Sigmoid colon (tissue), 7 donors: ENCODE measurements at regions of chr22 and their contacts with region 1.

Region 1: GRCh38 chr22:38872172-38872830 is at the start of gene CBX6:
- DNase-seq: peak; percentile 98
- H3K4me3 ChIP-seq: peak within 1 kb of the TSS; percentile 58 to 83 (median 71)
- H3K27ac ChIP-seq: peak within 1 kb of the TSS; percentile 92 to 99 (median 96)
- H3K4me1 ChIP-seq: peaks cover 0 to 49% (median 45%) of the 10 kb centered on the region in 4 donors
- H3K27me3 ChIP-seq: no peaks in the 10 kb centered on the region
- CTCF ChIP-seq: no peak
- EP300 ChIP-seq: no peak
- POLR2A ChIP-seq: peak; percentile 42
- total RNA-seq, gene CBX6: 47.2 to 90.6 (median 59.3) TPM

Region 2: DNA sequence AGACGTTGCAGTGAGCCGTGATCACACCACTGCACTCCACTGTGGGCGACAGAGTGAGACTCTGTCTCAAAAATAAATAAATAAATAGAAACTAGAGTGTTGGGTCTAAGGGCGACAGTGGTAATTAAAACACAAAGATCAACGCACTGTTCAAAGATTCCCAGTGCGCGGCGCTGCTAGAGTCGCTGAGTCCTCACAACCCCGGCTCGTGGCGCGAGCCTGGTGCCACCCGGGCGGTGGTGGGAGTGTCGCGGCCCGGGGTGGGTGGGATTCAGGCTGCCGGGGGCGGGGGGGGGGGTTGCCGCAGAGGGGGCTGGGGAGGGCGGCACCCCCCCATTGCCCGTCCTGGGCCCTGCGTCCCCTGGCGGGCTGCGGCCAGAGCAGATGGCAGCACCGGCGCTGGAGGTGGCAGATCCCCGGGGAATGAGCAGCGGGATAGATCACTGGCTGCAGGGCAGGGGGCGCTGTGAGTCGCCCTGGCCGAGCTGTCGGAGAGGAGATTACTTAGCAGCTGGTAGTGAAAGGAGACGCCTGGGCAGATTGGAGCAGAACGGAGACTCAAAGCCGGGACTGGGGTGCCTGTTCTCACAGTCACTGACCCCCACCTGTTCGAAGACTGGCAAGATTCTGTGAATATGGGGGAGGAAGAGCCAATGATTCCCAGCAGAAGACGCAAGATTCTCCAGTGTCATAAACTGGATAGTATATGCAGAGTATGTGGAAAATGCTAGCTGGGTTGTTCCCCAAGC is 54.9 kb after region 1 on chr22:
- intact Hi-C with region 1: loop called (anchors 1 kb)
- DNase-seq: peak; percentile 89
- H3K4me3 ChIP-seq: peak overlapping the region; percentile 17 to 53 (median 44)
- H3K27ac ChIP-seq: peak overlapping the region; percentile 66 to 90 (median 77)
- H3K4me1 ChIP-seq: peaks cover 0 to 33% (median 28%) of the 10 kb centered on the region in 4 donors
- H3K27me3 ChIP-seq: no peaks in the 10 kb centered on the region
- CTCF ChIP-seq: peak; percentile 55 to 81 (median 62)
- EP300 ChIP-seq: no peak
- POLR2A ChIP-seq: no peak

Region 3: DNA sequence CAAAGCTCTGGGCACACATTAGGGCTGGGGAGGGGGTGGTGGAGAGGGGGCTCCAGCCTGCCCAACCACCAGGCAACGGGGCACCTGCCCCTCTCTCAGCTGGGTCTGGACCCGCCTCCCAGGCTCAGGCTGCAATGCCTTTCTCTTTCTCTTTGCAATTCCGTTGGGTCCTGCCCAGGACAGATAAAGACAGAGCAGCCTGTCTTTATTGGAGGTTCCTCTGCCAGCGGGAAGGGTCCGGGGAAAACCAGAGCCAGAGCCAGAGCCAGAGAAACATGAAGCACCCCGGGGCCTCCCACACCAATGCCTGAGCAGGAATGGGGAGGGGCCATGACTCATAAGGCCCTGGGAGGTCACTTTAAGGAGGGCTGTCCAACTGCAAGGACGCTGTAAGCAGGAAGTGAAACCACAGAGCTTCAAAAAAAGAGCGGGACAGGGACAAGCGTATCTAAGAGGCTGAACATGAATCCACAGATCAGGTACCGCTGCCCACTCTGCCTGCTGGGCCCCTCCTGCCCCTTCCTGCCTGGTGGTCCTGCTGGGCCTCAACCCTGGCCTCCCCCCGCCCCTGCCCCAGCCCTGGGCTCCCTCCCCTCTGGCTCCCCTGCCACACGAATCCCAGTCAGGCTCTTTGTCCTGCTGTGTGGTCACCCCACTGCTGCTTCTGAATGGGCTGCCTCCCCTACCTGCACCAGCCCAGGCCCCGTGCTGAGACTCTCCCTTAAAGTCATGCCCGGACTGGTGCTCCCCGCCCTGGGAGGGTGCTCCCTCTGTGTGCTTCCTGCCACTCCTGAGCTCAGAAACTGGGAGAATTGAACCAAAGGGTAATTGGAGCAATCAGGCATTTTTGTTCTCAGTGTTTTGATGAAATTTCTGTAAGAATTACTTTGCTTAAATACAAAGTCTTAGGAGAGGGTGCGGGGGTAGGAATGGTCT is 110.0 kb after region 1 on chr22 and contains the start of gene APOBEC3B:
- intact Hi-C with region 1: loop called (anchors 5 kb)
- DNase-seq: peak; percentile 94
- H3K4me3 ChIP-seq: peak within 1 kb of the TSS in 3 of 4 donors; percentile 40 to 53 (median 48)
- H3K27ac ChIP-seq: peak within 1 kb of the TSS in 3 of 4 donors; percentile 71 to 78 (median 74)
- H3K4me1 ChIP-seq: peaks cover 0 to 18% (median 4%) of the 10 kb centered on the region in 4 donors
- H3K27me3 ChIP-seq: no peaks in the 10 kb centered on the region
- CTCF ChIP-seq: no peak
- EP300 ChIP-seq: no peak
- POLR2A ChIP-seq: no peak
- total RNA-seq, gene APOBEC3B: 0.71 to 3.1 TPM in 2 of 4 donors, not detected in the others

Region 4: DNA sequence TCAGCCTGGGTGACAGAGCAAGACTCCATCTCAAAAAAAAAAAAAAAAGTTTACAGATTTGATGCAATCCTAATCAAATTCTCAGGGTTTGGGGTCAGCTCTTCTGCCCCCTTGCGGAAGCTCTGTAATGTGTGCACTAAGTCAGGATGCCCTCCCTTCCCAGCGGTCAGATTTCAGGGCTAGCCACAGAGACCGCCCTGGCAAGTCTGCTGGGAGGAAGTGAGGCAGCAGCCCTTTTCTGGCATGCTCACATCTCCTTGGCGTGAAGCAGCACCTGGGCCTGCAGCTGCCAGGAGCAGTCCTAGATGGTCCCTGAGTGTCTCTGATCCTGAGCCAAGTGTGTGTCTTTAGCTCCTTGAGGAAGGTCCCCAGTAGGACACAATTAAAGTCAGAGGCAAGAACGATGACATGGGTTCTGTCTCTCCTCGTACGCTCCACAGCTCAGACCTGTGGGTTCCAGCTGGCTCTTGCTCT is 130.9 kb after region 1 on chr22:
- intact Hi-C with region 1: loop called (anchors 1 kb)
- DNase-seq: peak; percentile 86
- H3K4me3 ChIP-seq: no peak overlapping the region
- H3K27ac ChIP-seq: no peak overlapping the region
- H3K4me1 ChIP-seq: peaks cover 0 to 8% (median 2%) of the 10 kb centered on the region in 4 donors
- H3K27me3 ChIP-seq: no peaks in the 10 kb centered on the region
- CTCF ChIP-seq: peak; percentile 53 to 80 (median 70)
- EP300 ChIP-seq: no peak
- POLR2A ChIP-seq: no peak

Region 5: GRCh38 chr22:39152511-39153219 is 280.4 kb after region 1 on chr22 and contains the start of gene CBX7:
- intact Hi-C with region 1: loop called (anchors 2 kb)
- DNase-seq: peak; percentile 98
- H3K4me3 ChIP-seq: peak within 1 kb of the TSS; percentile 75 to 99 (median 98)
- H3K27ac ChIP-seq: peak within 1 kb of the TSS; percentile 95 to 99 (median 98)
- H3K4me1 ChIP-seq: peaks cover 0 to 54% (median 42%) of the 10 kb centered on the region in 4 donors
- H3K27me3 ChIP-seq: no peaks in the 10 kb centered on the region
- CTCF ChIP-seq: no peak
- EP300 ChIP-seq: no peak
- POLR2A ChIP-seq: peak; percentile 88 to 93
- total RNA-seq, gene CBX7: 108 to 166 (median 125) TPM

Region 6: DNA sequence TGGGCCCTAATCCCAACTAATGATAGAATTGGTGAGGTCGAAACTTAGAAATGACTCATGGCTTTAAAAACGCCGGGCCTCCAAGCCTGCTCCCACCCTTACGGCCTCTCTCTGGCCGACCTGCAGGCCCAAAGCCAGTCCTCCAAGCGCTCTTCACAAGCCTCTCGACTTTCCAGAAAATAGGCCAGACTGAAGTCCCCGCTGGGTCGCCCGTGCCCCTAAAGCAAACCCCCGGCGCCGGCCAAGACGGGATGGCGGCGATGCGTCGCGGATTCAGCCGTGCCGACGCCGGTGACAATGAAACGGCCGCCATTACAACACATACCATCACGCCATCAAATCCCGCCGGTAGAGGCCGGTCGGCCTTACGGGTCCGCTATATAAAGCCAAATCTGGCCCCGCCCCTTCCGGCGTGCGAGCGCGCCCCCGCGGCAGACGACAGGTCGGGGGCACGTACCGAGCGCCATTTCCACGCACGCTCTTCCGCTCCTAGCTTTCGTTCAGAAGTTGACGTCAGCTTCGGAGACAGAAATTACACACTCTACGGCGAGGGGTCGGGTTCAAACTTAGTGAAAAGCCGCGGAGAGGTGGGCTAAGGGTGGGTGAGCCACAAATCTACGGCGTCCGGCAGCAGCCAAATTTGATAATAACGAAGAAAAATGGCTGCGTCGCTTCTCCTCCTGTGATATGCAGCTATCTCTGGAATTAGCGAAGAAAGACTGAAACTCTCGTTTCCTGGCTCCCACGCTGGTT is 447.1 kb after region 1 on chr22 and contains the start of gene RPL3:
- intact Hi-C with region 1: loop called (anchors 2 kb)
- DNase-seq: peak; percentile 98
- H3K4me3 ChIP-seq: peak within 1 kb of the TSS; percentile 61 to 83 (median 76)
- H3K27ac ChIP-seq: peak within 1 kb of the TSS; percentile 92 to 99 (median 96)
- H3K4me1 ChIP-seq: peaks cover 0 to 49% (median 43%) of the 10 kb centered on the region in 4 donors
- H3K27me3 ChIP-seq: no peaks in the 10 kb centered on the region
- CTCF ChIP-seq: peak in 1 of 4 experiments; percentile 13
- EP300 ChIP-seq: peak in 2 of 4 donors; percentile 62 to 93
- POLR2A ChIP-seq: peak; percentile 87 to 91
- total RNA-seq, gene RPL3: 1,532 to 2,212 (median 2,076) TPM

Region 7: GRCh38 chr22:39520054-39520891 is 648.0 kb after region 1 on chr22 and contains the start of gene ATF4:
- intact Hi-C with region 1: loop called (anchors 5 kb)
- DNase-seq: peak; percentile 99
- H3K4me3 ChIP-seq: peak within 1 kb of the TSS; percentile 80 to 100 (median 96)
- H3K27ac ChIP-seq: peak within 1 kb of the TSS; percentile 99 to 100 (median 99)
- H3K4me1 ChIP-seq: peaks cover 0 to 56% (median 50%) of the 10 kb centered on the region in 4 donors
- H3K27me3 ChIP-seq: no peaks in the 10 kb centered on the region
- CTCF ChIP-seq: no peak
- EP300 ChIP-seq: peak in 1 of 4 donors; percentile 32
- POLR2A ChIP-seq: peak; percentile 100
- total RNA-seq, gene ATF4: 483 to 651 (median 631) TPM